GM18951 (cell line): ENCODE measurements at regions of chr19 and their contacts with region 1.

Region 1: DNA sequence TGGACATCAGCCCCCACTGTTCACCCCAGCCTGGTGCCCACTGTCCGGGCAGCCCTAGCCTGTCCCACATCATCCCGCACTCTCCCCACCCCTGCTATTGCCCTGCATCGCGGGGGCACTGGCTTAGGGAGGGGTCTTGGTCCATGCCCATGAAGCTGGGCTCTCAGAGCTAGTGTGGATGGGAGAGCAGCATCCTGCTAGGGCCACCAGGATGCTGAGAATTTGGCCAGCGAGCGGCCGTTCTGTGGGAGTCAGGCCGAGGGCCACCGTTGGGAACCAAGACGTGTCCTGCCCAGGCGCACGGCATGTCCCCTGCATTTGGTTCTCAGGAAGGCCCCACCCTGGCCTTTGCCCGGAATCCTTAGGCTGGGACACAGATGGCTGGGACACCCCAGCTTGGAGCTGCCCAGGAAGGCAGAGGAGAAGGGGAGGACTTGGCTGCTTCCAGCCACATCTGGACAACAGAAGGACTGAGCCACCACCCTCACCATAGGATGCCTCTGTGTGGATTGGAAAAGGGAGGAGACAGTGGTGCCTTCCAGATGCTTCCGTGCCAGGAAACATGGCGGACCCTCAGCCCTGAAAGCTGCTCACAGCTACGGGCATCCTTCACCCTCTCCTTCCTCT is 14.6 kb downstream of the ADGRE5 start:
- POLR2A ChIP-seq: no peak

Region 2: DNA sequence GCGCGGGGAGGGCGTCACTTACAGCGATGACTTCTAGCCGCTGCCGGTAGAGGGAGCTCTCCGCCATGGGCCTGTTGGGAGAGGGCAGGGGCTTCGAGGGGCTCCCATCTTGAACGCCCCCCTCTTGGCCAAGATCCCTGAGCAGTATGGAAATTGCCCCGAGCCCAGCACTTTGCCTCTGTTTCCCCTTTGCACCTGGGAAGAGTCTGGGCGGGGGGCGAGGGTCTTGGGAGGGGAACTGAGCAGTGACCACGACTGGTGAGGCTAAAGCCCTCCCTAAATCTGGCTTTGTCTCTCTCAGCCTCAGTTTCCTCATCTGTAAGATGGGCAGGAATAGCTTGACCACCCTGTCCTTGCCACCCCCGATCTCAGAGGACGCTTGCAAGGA is 336.7 kb before region 1 on chr19:
- in situ Hi-C with region 1: no loop called
- POLR2A ChIP-seq: no peak

Region 3: GRCh38 chr19:14248578-14249011 is 147.2 kb before region 1 on chr19:
- in situ Hi-C with region 1: no loop called
- POLR2A ChIP-seq: no peak

Region 4: DNA sequence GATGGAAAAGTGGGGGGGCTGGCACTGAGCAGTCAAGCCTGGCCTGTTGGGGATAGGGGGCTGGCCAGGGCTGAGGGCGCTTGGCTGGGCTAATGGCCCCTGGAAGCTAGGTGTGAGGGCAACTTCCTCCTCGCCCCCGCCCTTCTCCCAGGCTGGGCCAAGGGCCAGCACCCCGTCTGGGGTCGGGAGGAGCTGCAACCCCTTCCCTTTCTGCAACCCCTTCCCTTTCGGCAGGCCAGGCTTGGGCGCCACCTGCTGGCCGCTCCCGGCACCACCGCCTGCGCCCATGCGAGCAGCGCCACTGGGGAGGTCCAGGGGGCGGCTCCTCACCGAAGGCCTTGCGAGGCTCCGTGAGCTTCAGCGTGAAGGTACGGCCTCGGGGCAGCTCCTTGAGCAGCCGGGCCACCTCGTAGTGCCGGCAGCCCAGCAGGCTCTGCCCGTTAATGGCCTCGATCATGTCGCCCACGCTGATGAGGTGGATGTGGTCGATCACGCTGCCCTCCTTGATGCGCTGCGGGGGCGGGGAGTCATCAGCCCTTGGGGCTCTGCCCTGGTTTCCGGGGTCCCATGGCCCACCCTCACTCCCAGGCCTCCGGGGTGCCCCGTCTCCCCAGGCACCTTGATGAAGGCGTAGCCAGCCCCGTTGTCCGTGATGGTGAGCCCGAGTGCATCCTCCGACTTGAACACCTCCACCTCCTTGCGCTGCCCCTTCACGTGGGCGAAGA is 84.3 kb after region 1 on chr19:
- in situ Hi-C with region 1: no loop called
- POLR2A ChIP-seq: no peak

Region 5: GRCh38 chr19:14769201-14769600 is 373.4 kb after region 1 on chr19:
- in situ Hi-C with region 1: loop called (anchors 5 kb)
- POLR2A ChIP-seq: no peak